ENCODE measurements at regions of chr2 and their contacts with region 1.

Region 1: GRCh38 chr2:113198790-113199612 is 25.2 kb downstream of the PSD4 start:
- DNase-seq: peak; percentile 75
- H3K4me3 Mint-ChIP-seq: no peak overlapping the region
- H3K27ac Mint-ChIP-seq: no peak overlapping the region
- H3K4me1 Mint-ChIP-seq: peaks cover 27% of the 10 kb centered on the region
- H3K27me3 Mint-ChIP-seq: no peaks in the 10 kb centered on the region

Region 2: GRCh38 chr2:113092864-113093612 is 106.0 kb before region 1 on chr2:
- CTCF ChIA-PET with region 1: no interaction called
- POLR2A ChIA-PET with region 1: no interaction called
- DNase-seq: no peak
- H3K4me3 Mint-ChIP-seq: no peak overlapping the region
- H3K27ac Mint-ChIP-seq: no peak overlapping the region
- H3K4me1 Mint-ChIP-seq: peaks cover 11% of the 10 kb centered on the region
- H3K27me3 Mint-ChIP-seq: peaks cover 5% of the 10 kb centered on the region

Region 3: DNA sequence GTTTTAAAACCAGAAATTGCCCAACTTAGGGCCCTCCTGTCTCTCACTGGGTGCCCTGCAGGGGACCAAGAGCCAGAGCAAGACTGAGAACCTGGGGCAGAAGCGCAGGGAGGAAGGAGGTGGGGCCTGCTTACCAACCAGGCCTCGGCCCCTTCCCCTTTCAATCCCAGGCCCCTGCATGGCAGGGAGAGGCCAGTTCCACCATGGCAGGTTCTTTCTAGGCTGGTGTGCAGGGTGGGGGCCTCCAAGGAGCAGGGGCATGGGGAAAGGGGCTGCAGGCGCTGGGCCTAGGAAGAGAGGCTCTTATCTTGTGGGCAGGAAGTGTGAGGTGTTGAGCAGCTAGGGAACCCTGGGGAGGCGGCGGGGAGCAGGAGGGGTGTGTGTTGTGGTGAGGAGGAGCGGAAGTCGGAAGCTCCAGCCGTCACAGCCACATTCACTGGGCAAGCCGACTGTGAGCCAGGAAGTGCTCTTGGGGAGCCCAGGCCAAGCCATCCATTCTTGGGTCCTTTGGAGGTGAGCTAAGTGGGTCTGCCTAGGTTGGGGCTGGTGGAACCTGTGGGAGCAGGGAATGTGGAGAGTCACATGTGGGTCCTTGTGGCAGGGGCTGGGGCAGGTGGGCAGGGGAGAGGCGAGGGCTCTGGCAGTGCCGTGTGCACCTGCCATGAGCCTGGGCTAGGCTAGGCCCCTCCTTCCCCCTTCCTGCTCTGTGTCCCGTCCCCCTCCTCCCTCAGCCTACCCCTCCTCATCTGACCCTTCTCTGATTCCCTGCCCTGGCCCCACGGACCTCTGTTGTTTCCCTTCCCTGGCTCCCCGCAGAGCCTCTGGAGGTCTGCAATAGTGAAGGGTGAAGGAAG is 25.2 kb before region 1 on chr2 and contains the start of gene PSD4:
- CTCF ChIA-PET with region 1: interaction called, 23 read pairs
- POLR2A ChIA-PET with region 1: no interaction called
- DNase-seq: peak; percentile 94
- H3K4me3 Mint-ChIP-seq: peak within 1 kb of the TSS; percentile 84
- H3K27ac Mint-ChIP-seq: peak within 1 kb of the TSS; percentile 88
- H3K4me1 Mint-ChIP-seq: peaks cover 73% of the 10 kb centered on the region
- H3K27me3 Mint-ChIP-seq: peaks cover 2% of the 10 kb centered on the region
- total RNA-seq, gene PSD4: 329 to 335 TPM

Region 4: DNA sequence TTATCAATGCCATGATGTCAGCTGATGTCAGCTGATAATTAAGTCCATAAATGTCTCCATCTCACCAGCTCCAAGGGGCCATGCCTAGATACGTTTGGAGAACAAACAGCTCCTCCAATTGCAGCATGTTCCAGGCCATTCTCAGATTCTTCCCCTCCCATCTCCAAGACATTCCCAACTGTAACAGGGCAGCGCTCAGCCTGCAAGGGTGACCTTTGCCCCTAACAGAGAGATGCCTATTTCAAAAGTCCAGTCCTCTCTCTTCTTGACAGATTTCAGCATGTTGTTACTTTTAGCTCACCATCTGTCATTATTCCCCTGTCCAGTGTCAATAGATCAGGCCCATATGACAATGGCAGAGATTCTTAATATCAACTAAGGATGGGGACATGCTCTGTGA is 15.3 kb before region 1 on chr2:
- CTCF ChIA-PET with region 1: interaction called, 10 read pairs
- POLR2A ChIA-PET with region 1: interaction called, 3 read pairs
- DNase-seq: no peak
- H3K4me3 Mint-ChIP-seq: no peak overlapping the region
- H3K27ac Mint-ChIP-seq: no peak overlapping the region
- H3K4me1 Mint-ChIP-seq: peaks cover 79% of the 10 kb centered on the region
- H3K27me3 Mint-ChIP-seq: no peaks in the 10 kb centered on the region

Region 5: GRCh38 chr2:113228991-113229716 is 30.2 kb after region 1 on chr2:
- CTCF ChIA-PET with region 1: no interaction called
- POLR2A ChIA-PET with region 1: no interaction called
- DNase-seq: no peak
- H3K4me3 Mint-ChIP-seq: no peak overlapping the region
- H3K27ac Mint-ChIP-seq: no peak overlapping the region
- H3K4me1 Mint-ChIP-seq: peaks cover 27% of the 10 kb centered on the region
- H3K27me3 Mint-ChIP-seq: peaks cover 2% of the 10 kb centered on the region

Region 6: DNA sequence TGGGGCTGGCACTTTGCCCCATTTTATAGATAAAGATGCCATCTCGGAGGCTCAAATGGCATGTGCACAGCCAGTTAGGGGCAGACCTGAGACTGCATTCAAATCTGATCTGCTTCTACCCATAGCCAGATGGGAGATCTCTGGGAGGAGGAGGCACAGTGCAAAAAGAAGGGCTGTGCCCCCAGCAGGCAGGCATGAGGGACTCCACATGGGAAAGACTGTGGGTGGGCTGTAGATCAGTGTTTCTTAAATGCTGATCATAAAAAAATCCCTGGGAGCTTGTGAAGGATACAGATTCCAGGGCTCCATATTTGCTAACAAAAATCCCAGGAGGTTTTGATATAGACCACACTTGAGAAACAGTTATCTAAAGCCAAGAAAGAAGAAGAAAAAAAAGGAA is 64.5 kb after region 1 on chr2:
- CTCF ChIA-PET with region 1: no interaction called
- POLR2A ChIA-PET with region 1: no interaction called
- DNase-seq: no peak
- H3K4me3 Mint-ChIP-seq: no peak overlapping the region
- H3K27ac Mint-ChIP-seq: no peak overlapping the region
- H3K4me1 Mint-ChIP-seq: peaks cover 9% of the 10 kb centered on the region
- H3K27me3 Mint-ChIP-seq: peaks cover 14% of the 10 kb centered on the region